ENCODE measurements at regions of chr17 and their contacts with region 1.

Region 1: GRCh38 chr17:63697341-63698286 is 2.3 kb downstream of the LIMD2 start:
- DNase-seq: peak; percentile 72
- CTCF ChIP-seq: peak; percentile 80

Region 2: GRCh38 chr17:63675607-63676413 is 21.8 kb before region 1 on chr17:
- CTCF ChIA-PET with region 1: interaction called, 21 read pairs
- POLR2A ChIA-PET with region 1: no interaction called
- DNase-seq: no peak
- CTCF ChIP-seq: no peak

Region 3: DNA sequence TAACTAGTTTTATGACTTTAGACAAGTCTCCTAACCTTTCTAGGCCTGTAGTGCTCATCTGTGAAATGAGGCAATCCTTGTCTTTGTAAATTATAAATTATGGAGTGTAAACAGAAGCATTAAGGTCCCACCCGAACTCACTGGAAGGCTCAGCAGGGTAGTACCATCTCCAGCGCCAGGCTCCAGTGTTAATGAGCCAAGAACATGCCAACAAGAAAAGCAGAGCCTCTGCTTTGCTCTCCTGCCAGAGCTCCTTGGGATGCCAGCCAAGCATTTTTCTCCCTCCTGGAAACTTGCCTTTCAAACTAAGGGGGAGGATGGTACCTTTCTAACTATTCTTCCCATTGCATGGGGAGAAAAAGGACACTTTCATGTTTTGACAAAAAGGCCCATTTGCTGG is 12.6 kb before region 1 on chr17:
- CTCF ChIA-PET with region 1: interaction called, 56 read pairs
- POLR2A ChIA-PET with region 1: no interaction called
- DNase-seq: no peak
- CTCF ChIP-seq: no peak

Region 4: GRCh38 chr17:63709098-63709497 is 11.5 kb after region 1 on chr17:
- CTCF ChIA-PET with region 1: interaction called, 15 read pairs
- POLR2A ChIA-PET with region 1: interaction called, 3 read pairs
- DNase-seq: no peak
- CTCF ChIP-seq: no peak

Measured in GM10248 (cell line).